Transverse colon (tissue), 4 donors: ENCODE measurements at regions of chr13 and their contacts with region 1.

Region 1: GRCh38 chr13:99176309-99177276 is 24.1 kb upstream of the UBAC2 start:
- DNase-seq: peak; percentile 81
- H3K4me3 ChIP-seq: no peak overlapping the region
- H3K27ac ChIP-seq: no peak overlapping the region
- H3K4me1 ChIP-seq: peaks cover 4 to 8% (median 7%) of the 10 kb centered on the region in 4 donors
- H3K27me3 ChIP-seq: peaks cover 11% of the 10 kb centered on the region
- CTCF ChIP-seq: peak; percentile 89 to 94 (median 92)
- EP300 ChIP-seq: no peak
- POLR2A ChIP-seq: no peak

Region 2: GRCh38 chr13:99264051-99264450 is 87.5 kb after region 1 on chr13:
- in situ Hi-C with region 1: loop called in 3 of 4 experiments (anchors 5 to 10 kb)
- intact Hi-C with region 1: loop called (anchors 5 kb)
- DNase-seq: no peak
- H3K4me3 ChIP-seq: no peak overlapping the region
- H3K27ac ChIP-seq: no peak overlapping the region
- H3K4me1 ChIP-seq: peaks cover 0 to 14% (median 1%) of the 10 kb centered on the region in 4 donors
- H3K27me3 ChIP-seq: no peaks in the 10 kb centered on the region
- CTCF ChIP-seq: no peak
- EP300 ChIP-seq: no peak
- POLR2A ChIP-seq: no peak

Region 3: DNA sequence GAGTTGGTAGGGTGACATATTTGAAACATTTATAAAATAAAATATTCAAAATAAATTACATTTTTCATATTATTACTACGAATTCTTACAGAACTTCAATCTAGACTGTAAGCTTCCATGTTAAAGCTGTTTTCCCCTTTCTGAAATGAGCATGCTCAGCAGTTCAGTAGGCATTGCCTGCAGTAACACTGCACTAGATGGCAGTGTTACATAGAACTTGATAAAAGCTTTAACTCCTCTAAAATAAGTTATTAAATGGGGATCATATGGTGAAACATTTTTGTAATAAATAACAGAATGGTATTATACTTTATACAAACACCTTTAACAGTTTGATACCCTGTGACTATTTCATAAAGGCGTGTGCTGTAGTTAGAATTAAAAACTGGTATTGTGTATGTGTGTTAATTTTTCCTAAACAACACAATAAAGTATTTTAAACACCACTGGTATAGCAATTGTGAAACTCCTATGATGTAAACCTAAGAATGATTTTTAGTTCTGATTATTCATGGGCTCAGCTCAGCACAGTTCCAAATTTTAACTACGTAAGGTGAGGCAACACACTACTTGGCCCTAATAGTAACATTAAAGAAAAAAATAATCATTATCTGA is 93.1 kb after region 1 on chr13:
- in situ Hi-C with region 1: loop called in 3 of 4 experiments (anchors 5 to 10 kb)
- intact Hi-C with region 1: loop called (anchors 5 kb)
- DNase-seq: no peak
- H3K4me3 ChIP-seq: no peak overlapping the region
- H3K27ac ChIP-seq: peak overlapping the region in 2 of 4 donors; percentile 7 to 13
- H3K4me1 ChIP-seq: peaks cover 0 to 8% (median 0%) of the 10 kb centered on the region in 4 donors
- H3K27me3 ChIP-seq: no peaks in the 10 kb centered on the region
- CTCF ChIP-seq: peak; percentile 50 to 62 (median 58)
- EP300 ChIP-seq: no peak
- POLR2A ChIP-seq: no peak

Region 4: GRCh38 chr13:99436686-99437416 is 260.3 kb after region 1 on chr13:
- in situ Hi-C with region 1: loop called (anchors 5 to 25 kb)
- intact Hi-C with region 1: loop called (anchors 2 kb)
- DNase-seq: peak; percentile 90
- H3K4me3 ChIP-seq: no peak overlapping the region
- H3K27ac ChIP-seq: no peak overlapping the region
- H3K4me1 ChIP-seq: peaks cover 0 to 15% (median 3%) of the 10 kb centered on the region in 4 donors
- H3K27me3 ChIP-seq: peaks cover 13% of the 10 kb centered on the region
- CTCF ChIP-seq: peak; percentile 100
- EP300 ChIP-seq: no peak
- POLR2A ChIP-seq: peak; percentile 9